HCT116 (cell line): ENCODE measurements at regions of chr20 and their contacts with region 1.

Region 1: GRCh38 chr20:9978397-9979004 is 56.3 kb upstream of the ANKEF1 start:
- DNase-seq: peak; percentile 79
- ATAC-seq: peak; percentile 76
- H3K4me3 ChIP-seq: peak overlapping the region; percentile 8 to 23; a peak in 2 of 4 replicates
- H3K27ac ChIP-seq: peak overlapping the region; percentile 46; the same call in 1 of the 2 replicates
- H3K4me1 ChIP-seq: peaks cover 17 to 19% of the 10 kb centered on the region in 2 experiments; a peak in 2 of 4 replicates
- H3K27me3 ChIP-seq: no peaks in the 10 kb centered on the region
- CTCF ChIP-seq: peak; percentile 59 to 91 (median 82)
- POLR2A ChIP-seq: no peak
- RAD21 ChIP-seq: peak; percentile 95

Region 2: DNA sequence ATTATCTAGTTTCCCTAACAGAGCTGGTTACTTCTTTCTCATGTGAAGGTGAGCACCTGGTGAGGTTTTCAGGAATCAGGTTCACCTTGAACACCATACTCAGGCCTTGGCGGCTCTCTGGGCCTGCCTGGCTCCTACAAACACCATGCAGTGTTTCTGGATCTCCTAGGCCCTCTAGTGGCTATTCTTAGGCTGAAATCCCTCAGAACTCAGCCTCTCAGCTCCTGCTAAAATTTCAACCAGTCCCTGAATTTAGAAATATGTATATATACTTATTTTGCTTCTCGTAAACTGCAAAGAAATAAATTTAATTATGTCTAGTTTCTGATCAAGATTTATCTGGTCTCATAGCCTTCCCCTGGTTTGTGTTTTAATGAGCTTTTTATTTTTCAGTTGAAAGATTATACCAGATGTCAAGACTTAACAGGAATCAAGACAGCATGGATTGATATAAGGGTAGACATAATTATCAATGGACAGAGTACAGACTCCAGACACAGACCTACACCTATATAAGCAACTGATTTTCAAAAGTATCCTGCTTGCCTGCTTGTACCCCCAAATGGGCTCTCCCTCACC is 112.2 kb after region 1 on chr20:
- CTCF ChIA-PET with region 1: interaction called, 52 read pairs
- POLR2A ChIA-PET with region 1: interaction called, 4 read pairs
- RAD21 ChIA-PET with region 1: interaction called, 12 to 15 read pairs
- intact Hi-C with region 1: loop called (anchors 1 kb)
- DNase-seq: peak; percentile 38
- ATAC-seq: peak; percentile 91
- H3K4me3 ChIP-seq: no peak overlapping the region
- H3K27ac ChIP-seq: no peak overlapping the region
- H3K4me1 ChIP-seq: peaks cover 5 to 13% of the 10 kb centered on the region in 2 experiments; a peak in 3 of 4 replicates
- H3K27me3 ChIP-seq: no peaks in the 10 kb centered on the region
- CTCF ChIP-seq: peak; percentile 51 to 76 (median 73); a peak in 5 of 6 replicates
- POLR2A ChIP-seq: no peak
- RAD21 ChIP-seq: peak; percentile 80

Region 3: GRCh38 chr20:10225439-10226060 is 247.0 kb after region 1 on chr20:
- CTCF ChIA-PET with region 1: interaction called, 3 read pairs
- POLR2A ChIA-PET with region 1: no interaction called
- RAD21 ChIA-PET with region 1: interaction called in 1 of 2 experiments, 5 read pairs
- intact Hi-C with region 1: loop called (anchors 2 kb)
- DNase-seq: no peak
- ATAC-seq: peak; percentile 67
- H3K4me3 ChIP-seq: no peak overlapping the region
- H3K27ac ChIP-seq: no peak overlapping the region
- H3K4me1 ChIP-seq: no peaks in the 10 kb centered on the region
- H3K27me3 ChIP-seq: peaks cover 22% of the 10 kb centered on the region
- CTCF ChIP-seq: peak in 2 of 3 experiments; percentile 46 to 49; a peak in 4 of 6 replicates
- POLR2A ChIP-seq: no peak
- RAD21 ChIP-seq: peak; percentile 33

Region 4: DNA sequence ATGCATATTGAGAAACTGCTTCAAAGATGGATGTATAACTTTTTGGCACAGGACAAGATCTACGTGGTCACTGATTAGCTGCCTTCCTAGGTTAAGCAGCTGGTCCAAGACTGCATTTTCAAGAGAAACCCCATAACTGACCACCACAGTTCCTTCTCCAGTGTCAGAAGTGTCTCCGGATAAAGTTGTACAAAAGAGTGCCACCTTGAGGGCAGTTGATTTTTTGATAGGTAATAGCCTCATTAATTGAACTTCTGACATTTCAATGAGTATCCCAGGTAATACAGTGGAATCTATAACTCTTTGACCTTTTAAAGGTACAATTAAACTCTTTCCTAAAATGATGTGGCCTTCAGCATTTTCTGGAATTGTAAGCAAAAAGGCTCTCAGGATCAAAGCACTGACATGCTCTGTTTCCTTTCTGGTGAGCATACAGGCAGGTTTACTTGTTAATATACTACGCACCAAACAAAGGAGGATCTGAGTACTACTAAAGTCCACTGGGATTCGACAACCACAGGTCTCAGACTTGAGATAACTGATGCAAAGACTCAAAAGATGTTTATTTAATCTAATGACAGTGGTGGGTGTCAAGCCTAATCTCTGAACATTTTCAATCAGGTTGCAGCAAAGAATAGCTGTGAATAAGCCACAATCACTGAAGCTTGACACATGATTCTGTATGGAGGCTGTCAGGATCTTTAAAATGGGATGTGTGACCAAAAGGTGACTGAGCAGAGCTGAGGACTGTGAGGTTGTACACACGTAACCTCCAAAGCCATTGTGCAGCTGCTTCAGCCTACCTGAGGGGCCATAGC is 434.3 kb after region 1 on chr20:
- CTCF ChIA-PET with region 1: interaction called, 3 read pairs
- POLR2A ChIA-PET with region 1: no interaction called
- RAD21 ChIA-PET with region 1: no interaction called
- intact Hi-C with region 1: loop called (anchors 5 kb)
- DNase-seq: no peak
- ATAC-seq: peak; percentile 57; the same call in 1 of the 2 replicates
- H3K4me3 ChIP-seq: no peak overlapping the region
- H3K27ac ChIP-seq: no peak overlapping the region
- H3K4me1 ChIP-seq: peaks cover 8 to 13% of the 10 kb centered on the region in 2 experiments; a peak in 3 of 4 replicates
- H3K27me3 ChIP-seq: no peaks in the 10 kb centered on the region
- CTCF ChIP-seq: peak in 2 of 3 experiments; percentile 29 to 40; a peak in 3 of 6 replicates
- POLR2A ChIP-seq: no peak
- RAD21 ChIP-seq: 0 out of 2 replicates have a peak, but pooled peaks have one; percentile 22

Region 5: DNA sequence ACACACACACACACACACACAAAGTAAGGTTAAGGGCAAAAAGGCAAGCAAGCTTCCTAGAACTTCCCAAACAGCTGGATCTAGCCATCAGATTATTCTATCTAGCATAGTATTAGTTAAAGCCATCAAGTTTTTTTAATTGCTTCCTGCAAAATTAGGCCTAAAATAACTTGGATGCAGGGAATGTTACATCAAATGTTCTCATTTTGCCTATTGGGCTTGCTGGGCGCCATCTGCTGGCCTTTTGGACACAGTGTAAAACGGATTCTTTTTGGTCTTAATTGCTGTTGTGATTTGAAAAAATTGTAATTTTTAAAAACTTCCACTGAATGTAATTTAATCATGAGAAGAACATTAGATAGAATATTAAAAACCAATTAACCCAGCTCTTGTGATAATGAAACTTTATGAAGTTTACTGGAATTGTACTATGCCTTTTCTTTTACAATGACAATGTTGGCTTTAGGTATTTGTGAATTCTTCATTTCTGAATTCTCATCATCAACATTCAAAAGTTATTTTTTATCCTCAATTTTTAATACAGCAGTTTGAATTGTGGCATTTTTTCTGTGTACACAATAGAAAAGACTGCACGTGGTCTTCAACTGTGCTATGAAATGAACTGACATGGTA is 448.7 kb after region 1 on chr20:
- CTCF ChIA-PET with region 1: interaction called, 18 read pairs
- POLR2A ChIA-PET with region 1: no interaction called
- RAD21 ChIA-PET with region 1: no interaction called
- intact Hi-C with region 1: loop called (anchors 1 kb)
- DNase-seq: no peak
- ATAC-seq: peak; percentile 72
- H3K4me3 ChIP-seq: no peak overlapping the region
- H3K27ac ChIP-seq: no peak overlapping the region
- H3K4me1 ChIP-seq: peaks cover 0 to 16% of the 10 kb centered on the region in 2 experiments; a peak in 3 of 4 replicates
- H3K27me3 ChIP-seq: no peaks in the 10 kb centered on the region
- CTCF ChIP-seq: peak; percentile 43 to 88 (median 78); a peak in 5 of 6 replicates
- POLR2A ChIP-seq: no peak
- RAD21 ChIP-seq: peak; percentile 54

Region 6: DNA sequence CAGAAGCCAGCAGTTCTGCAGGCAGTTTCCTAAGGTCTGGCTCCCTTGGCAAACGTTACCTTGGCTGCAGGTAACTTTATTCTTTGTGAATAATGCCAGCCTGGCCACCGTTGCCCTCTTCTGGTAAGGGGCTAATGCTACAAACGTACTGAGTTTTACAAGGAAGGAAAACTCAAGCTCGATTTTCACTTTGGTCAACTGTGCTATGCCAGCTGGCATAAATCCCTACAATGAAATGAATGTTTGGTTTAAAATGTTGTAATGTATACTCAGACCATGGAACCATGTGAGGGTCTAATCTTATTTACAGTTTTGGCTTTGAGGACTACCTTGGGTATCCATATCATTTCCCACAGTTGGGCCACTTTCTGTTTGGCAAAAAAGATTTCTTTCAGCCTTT is 558.0 kb after region 1 on chr20:
- CTCF ChIA-PET with region 1: interaction called, 5 read pairs
- POLR2A ChIA-PET with region 1: no interaction called
- RAD21 ChIA-PET with region 1: no interaction called
- intact Hi-C with region 1: loop called (anchors 5 kb)
- DNase-seq: no peak
- ATAC-seq: peak; percentile 28; the same call in 1 of the 2 replicates
- H3K4me3 ChIP-seq: no peak overlapping the region
- H3K27ac ChIP-seq: no peak overlapping the region
- H3K4me1 ChIP-seq: peaks cover 54 to 60% of the 10 kb centered on the region in 2 experiments
- H3K27me3 ChIP-seq: no peaks in the 10 kb centered on the region
- CTCF ChIP-seq: peak; percentile 45 to 51 (median 49); a peak in 5 of 6 replicates
- POLR2A ChIP-seq: no peak
- RAD21 ChIP-seq: peak; percentile 78